ENCODE measurements at regions of chr10 and their contacts with region 1.

Region 1: GRCh38 chr10:35336084-35336831 is at the start of gene CCNY:
- DNase-seq: peak; percentile 71
- H3K4me3 ChIP-seq: peak within 1 kb of the TSS; percentile 87 to 90 (median 88)
- H3K27ac ChIP-seq: peak within 1 kb of the TSS; percentile 79
- H3K4me1 ChIP-seq: peaks cover 40% of the 10 kb centered on the region
- H3K27me3 ChIP-seq: no peaks in the 10 kb centered on the region
- CTCF ChIP-seq: no peak
- total RNA-seq, gene CCNY: 32.0 to 62.3 TPM

Region 2: GRCh38 chr10:35306852-35307256 is 29.4 kb before region 1 on chr10:
- CTCF ChIA-PET with region 1: interaction called, 5 read pairs
- dilution Hi-C with region 1: no loop called
- in situ Hi-C with region 1: no loop called
- intact Hi-C with region 1: loop called (anchors 2 kb)
- DNase-seq: peak; percentile 95
- H3K4me3 ChIP-seq: peak overlapping the region; percentile 10 to 25 (median 17)
- H3K27ac ChIP-seq: peak overlapping the region; percentile 97
- H3K4me1 ChIP-seq: peaks cover 12% of the 10 kb centered on the region
- H3K27me3 ChIP-seq: no peaks in the 10 kb centered on the region
- CTCF ChIP-seq: no peak

Region 3: GRCh38 chr10:35421553-35422178 is 85.4 kb after region 1 on chr10:
- CTCF ChIA-PET with region 1: no interaction called
- dilution Hi-C with region 1: no loop called
- in situ Hi-C with region 1: no loop called
- intact Hi-C with region 1: loop called (anchors 5 kb)
- DNase-seq: peak; percentile 82
- H3K4me3 ChIP-seq: peak overlapping the region in 1 of 3 experiments; percentile 1
- H3K27ac ChIP-seq: peak overlapping the region; percentile 47
- H3K4me1 ChIP-seq: peaks cover 53% of the 10 kb centered on the region
- H3K27me3 ChIP-seq: no peaks in the 10 kb centered on the region
- CTCF ChIP-seq: no peak

Region 4: GRCh38 chr10:35447693-35448407 is 111.6 kb after region 1 on chr10:
- CTCF ChIA-PET with region 1: no interaction called
- dilution Hi-C with region 1: no loop called
- in situ Hi-C with region 1: no loop called
- intact Hi-C with region 1: loop called (anchors 2 kb)
- DNase-seq: peak; percentile 67
- H3K4me3 ChIP-seq: peak overlapping the region; percentile 4 to 33 (median 5)
- H3K27ac ChIP-seq: peak overlapping the region; percentile 71
- H3K4me1 ChIP-seq: peaks cover 40% of the 10 kb centered on the region
- H3K27me3 ChIP-seq: no peaks in the 10 kb centered on the region
- CTCF ChIP-seq: no peak

Region 5: DNA sequence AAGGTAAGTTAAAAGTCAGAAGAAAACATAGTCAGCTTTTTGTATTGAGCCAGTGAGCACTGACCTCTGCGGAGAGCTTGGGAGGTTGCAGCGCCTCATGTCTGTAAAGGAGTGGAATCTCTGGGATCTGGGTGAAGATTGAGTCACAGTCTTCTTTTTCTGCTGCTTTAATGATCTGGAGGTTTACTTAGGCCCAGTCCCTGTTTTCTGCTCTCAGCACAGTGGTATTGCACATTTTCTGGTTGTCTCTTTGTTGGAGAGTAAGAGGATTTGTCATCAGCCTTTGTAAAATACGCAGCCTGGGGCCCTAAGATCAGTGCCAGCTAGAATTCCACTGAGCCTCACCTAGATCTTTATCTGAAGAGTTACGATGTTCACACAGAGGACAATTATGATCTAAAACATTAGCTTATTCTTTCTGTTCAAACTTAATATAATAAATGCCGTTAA is 210.6 kb after region 1 on chr10:
- CTCF ChIA-PET with region 1: no interaction called
- dilution Hi-C with region 1: no loop called
- in situ Hi-C with region 1: no loop called
- intact Hi-C with region 1: loop called (anchors 2 kb)
- DNase-seq: peak; percentile 95
- H3K4me3 ChIP-seq: no peak overlapping the region
- H3K27ac ChIP-seq: peak overlapping the region; percentile 79
- H3K4me1 ChIP-seq: peaks cover 26% of the 10 kb centered on the region
- H3K27me3 ChIP-seq: no peaks in the 10 kb centered on the region
- CTCF ChIP-seq: peak in 1 of 2 donors; percentile 39

Region 6: DNA sequence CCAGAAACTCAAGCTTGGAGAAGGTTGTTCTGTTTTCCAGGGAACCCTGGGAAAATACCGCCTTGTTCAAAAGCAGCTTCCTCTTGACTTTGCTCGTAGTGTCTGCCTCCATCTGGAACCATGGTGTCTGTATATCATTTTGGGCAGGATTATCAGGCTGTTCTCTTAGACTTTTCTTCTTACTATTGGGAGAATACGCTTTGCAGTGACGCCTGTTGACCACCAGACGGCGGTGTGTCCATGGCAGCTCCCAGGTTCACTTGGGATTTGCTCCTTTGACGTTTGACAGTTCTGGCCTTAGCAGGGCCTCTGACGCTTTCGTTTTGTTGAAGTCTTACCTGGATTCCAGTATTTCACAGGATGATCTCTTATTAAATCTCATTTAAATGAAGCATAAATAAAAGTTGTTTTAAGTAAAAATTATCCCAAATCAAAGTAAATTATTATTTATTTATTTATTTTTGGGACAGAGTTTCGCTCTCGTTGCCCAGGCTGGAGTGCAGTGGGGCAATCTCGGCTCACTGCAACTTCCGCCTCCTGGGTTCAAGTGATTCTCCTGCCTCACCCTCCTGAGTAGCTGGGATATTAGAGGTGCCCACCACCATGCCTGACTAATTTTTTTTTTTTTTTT is 227.1 kb after region 1 on chr10:
- CTCF ChIA-PET with region 1: no interaction called
- dilution Hi-C with region 1: no loop called
- in situ Hi-C with region 1: no loop called
- intact Hi-C with region 1: loop called (anchors 2 kb)
- DNase-seq: peak; percentile 45
- H3K4me3 ChIP-seq: no peak overlapping the region
- H3K27ac ChIP-seq: no peak overlapping the region
- H3K4me1 ChIP-seq: no peaks in the 10 kb centered on the region
- H3K27me3 ChIP-seq: no peaks in the 10 kb centered on the region
- CTCF ChIP-seq: peak; percentile 99 to 100

Measured in mammary epithelial cell (primary cell).